ENCODE measurements at regions of chr12 and their contacts with region 1.

Region 1: DNA sequence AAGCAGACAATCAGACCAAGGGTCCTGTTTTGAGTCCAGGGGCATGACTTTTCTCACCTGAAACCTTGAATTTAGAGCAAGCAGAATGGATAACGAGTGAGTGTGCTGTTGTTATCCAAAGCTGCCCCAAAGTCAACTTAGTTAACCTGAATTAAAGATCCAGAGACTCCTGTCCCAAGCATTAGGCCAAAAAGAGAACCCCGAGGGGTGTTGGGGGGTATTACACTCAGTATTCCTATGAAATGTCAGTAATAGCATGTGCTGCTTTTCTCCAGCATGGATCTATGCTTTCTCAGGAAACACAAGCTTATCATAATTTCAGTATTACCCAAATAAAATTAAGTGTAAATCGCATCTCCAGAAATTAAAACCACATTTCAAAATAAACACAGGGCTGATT is 19.0 kb downstream of the EIF4B start:
- DNase-seq: no peak
- ATAC-seq: no peak
- H3K4me3 ChIP-seq: no peak overlapping the region
- H3K4me3 Mint-ChIP-seq: no peak overlapping the region
- H3K27ac ChIP-seq: no peak overlapping the region
- H3K27ac Mint-ChIP-seq: no peak overlapping the region
- H3K4me1 ChIP-seq: no peaks in the 10 kb centered on the region
- H3K4me1 Mint-ChIP-seq: peaks cover 0 to 6% (median 1%) of the 10 kb centered on the region in 3 donors
- H3K27me3 ChIP-seq: no peaks in the 10 kb centered on the region
- H3K27me3 Mint-ChIP-seq: no peaks in the 10 kb centered on the region

Region 2: GRCh38 chr12:52710730-52711129 is 314.5 kb before region 1 on chr12:
- CTCF ChIA-PET with region 1: interaction called in 1 of 2 experiments, 14 read pairs
- POLR2A ChIA-PET with region 1: no interaction called
- DNase-seq: no peak
- ATAC-seq: no peak
- H3K4me3 ChIP-seq: no peak overlapping the region
- H3K4me3 Mint-ChIP-seq: no peak overlapping the region
- H3K27ac ChIP-seq: no peak overlapping the region
- H3K27ac Mint-ChIP-seq: no peak overlapping the region
- H3K4me1 ChIP-seq: peaks cover 12 to 25% of the 10 kb centered on the region in 2 experiments
- H3K4me1 Mint-ChIP-seq: peaks cover 32 to 37% (median 34%) of the 10 kb centered on the region in 3 donors
- H3K27me3 ChIP-seq: peaks cover 0 to 27% of the 10 kb centered on the region in 2 experiments
- H3K27me3 Mint-ChIP-seq: peaks cover 17 to 32% of the 10 kb centered on the region in 2 donors